ENCODE measurements at regions of chr7 and their contacts with region 1.

Region 1: DNA sequence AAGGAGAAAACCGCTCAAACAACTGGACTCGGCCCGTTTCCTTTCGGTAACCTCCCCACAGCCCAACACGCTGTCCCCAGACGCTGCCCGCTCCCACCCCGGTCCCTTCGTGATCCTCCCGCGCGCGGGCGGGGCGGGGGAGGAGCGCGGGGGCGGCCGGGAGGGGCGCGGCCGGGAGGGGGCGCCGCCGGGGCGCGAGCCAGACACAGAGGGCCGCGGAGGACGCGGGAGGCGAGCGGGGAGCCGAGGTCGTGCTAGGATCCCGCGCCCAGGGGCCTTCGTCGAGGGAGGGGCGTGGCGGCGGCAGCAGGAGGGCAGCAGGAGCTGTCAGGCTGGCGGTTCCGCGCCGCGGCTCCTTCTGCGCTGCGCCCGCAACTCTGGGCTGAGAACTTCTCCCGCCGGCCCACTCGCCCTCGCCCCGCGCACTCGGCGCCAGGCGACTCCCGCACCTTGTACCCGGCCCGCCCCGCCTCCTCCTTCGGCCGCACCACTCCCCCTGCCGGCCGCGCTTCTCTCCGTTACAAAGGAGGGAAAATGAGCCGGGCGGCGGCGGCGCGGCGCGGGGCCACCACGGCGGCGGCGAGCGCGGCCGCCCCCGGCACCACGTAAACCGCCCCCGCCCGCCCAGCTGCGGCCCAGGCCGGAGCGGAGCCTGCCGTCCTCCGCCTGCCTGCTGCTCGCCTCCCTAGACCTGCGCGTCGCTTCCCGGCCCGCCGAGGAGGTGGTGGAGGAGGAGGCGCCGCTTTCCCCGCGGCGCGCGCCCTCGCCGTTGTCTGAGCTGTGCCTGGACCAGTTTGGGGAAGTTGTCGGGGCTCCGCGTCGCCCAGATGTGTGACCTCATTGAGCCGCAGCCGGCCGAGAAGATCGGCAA is at the start of gene CDK14:
- DNase-seq: peak; percentile 59
- ATAC-seq: peak; percentile 42
- H3K4me3 ChIP-seq: peak within 1 kb of the TSS; percentile 90
- H3K27ac ChIP-seq: peak within 1 kb of the TSS; percentile 89
- H3K4me1 ChIP-seq: peaks cover 32% of the 10 kb centered on the region
- H3K27me3 ChIP-seq: no peaks in the 10 kb centered on the region
- CTCF ChIP-seq: peak; percentile 26; the same call in 1 of the 2 replicates
- total RNA-seq, gene CDK14: 6.6 and 8.2 TPM in 2 replicates

Region 2: GRCh38 chr7:90455163-90456030 is 140.6 kb before region 1 on chr7:
- CTCF ChIA-PET with region 1: interaction called, 5 read pairs
- POLR2A ChIA-PET with region 1: no interaction called
- intact Hi-C with region 1: loop called (anchors 10 kb)
- DNase-seq: peak; percentile 67
- ATAC-seq: peak; percentile 93
- H3K4me3 ChIP-seq: peak overlapping the region; percentile 52; the same call in 1 of the 2 replicates
- H3K27ac ChIP-seq: no peak overlapping the region
- H3K4me1 ChIP-seq: no peaks in the 10 kb centered on the region
- H3K27me3 ChIP-seq: no peaks in the 10 kb centered on the region
- CTCF ChIP-seq: peak; percentile 82

Region 3: DNA sequence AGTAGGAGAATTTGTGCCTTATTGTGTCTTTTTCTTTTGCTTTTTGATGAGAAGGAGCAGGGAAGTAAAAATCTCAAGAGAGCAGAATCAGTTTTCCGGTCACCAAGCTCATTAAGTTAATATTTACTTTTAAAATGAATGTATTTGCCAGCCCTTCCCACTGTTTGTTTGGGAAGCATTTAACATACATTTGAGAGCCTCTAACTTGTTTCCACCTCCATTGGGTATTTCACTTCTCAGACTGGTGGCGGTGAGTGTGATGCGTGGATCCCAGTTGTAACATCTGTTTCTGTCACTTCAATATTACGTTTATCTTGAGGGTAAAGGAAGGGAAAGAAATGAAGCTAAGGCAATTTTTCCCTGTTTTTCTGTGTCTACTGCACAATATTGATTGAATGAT is 22.8 kb after region 1 on chr7:
- CTCF ChIA-PET with region 1: no interaction called
- POLR2A ChIA-PET with region 1: interaction called, 4 read pairs
- intact Hi-C with region 1: loop called (anchors 2 kb)
- DNase-seq: peak; percentile 46
- ATAC-seq: peak; percentile 84
- H3K4me3 ChIP-seq: no peak overlapping the region
- H3K27ac ChIP-seq: peak overlapping the region; percentile 55
- H3K4me1 ChIP-seq: peaks cover 31% of the 10 kb centered on the region
- H3K27me3 ChIP-seq: no peaks in the 10 kb centered on the region
- CTCF ChIP-seq: no peak

Region 4: DNA sequence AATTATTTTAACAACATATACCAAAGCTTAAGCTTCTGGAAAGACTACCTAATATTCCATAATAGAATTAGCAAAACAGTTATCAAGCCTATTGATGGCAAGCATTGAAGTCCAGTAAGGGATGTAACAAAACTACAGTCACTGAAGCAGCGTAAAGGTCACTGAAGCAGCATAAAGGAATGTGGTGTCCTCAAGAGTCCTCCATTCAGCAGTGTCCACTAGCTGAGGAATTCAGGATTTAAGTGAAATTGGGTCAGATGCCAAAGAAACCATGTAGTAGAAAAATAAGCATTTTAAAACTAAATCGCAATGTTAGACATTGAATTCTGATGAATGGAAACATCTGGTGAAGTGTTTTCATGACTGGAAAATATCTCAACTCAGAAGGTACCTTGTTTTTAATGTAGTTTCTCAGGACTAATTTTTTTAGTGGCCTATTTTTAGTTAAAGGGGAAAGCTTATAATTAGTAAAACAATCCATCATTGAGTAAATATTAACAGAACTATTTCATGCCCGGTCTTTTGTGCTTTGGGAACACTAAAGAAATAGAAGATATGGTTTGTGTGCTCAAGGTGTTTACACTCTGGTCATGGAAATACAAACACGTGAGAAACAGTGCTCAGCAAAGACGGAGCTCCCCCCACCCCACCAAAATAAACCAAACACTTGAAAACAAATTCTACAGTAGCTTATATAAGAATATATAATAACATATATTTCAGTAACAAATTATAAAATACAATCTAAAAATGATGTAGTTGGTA is 121.4 kb after region 1 on chr7:
- CTCF ChIA-PET with region 1: interaction called, 16 read pairs
- POLR2A ChIA-PET with region 1: no interaction called
- intact Hi-C with region 1: no loop called
- DNase-seq: no peak
- ATAC-seq: no peak
- H3K4me3 ChIP-seq: no peak overlapping the region
- H3K27ac ChIP-seq: no peak overlapping the region
- H3K4me1 ChIP-seq: peaks cover 6% of the 10 kb centered on the region; the same call in 1 of the 2 replicates
- H3K27me3 ChIP-seq: no peaks in the 10 kb centered on the region
- CTCF ChIP-seq: no peak

Measured in PC-3 (cell line).